Activated B cell treated with CpG ODN at 0.5 μM for 24 hours (primary cell): ENCODE measurements at regions of chr1 and their contacts with region 1.

Region 1: DNA sequence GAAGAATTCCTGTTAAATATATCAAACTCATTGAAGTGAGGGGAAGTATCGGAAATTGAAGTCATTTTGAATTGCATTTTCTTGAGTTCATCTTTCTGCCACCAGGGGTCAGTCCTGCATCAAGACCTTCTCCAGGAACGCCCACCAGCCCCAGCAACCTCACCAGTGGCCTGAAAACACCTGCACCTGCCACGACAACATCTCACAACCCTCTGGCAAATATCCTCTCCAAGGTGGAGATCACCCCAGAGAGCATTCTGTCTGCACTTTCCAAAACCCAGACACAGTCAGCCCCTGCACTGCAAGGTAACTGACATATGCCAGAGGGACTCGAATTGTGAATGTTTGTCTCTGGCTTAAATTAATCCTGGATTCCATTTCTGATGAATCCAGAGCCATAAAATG is 22.8 kb upstream of the TARS2 start:
- DNase-seq: peak; percentile 32
- ATAC-seq: peak; percentile 80
- H3K4me3 Mint-ChIP-seq: no peak overlapping the region
- H3K27ac Mint-ChIP-seq: no peak overlapping the region
- H3K4me1 Mint-ChIP-seq: peaks cover 4% of the 10 kb centered on the region
- H3K27me3 Mint-ChIP-seq: no peaks in the 10 kb centered on the region
- CTCF ChIP-seq: no peak

Region 2: GRCh38 chr1:149927503-149928387 is 536.7 kb before region 1 on chr1 and contains the start of gene SF3B4:
- CTCF ChIA-PET with region 1: no interaction called
- POLR2A ChIA-PET with region 1: no interaction called
- intact Hi-C with region 1: no loop called
- DNase-seq: peak; percentile 94
- ATAC-seq: peak; percentile 96
- H3K4me3 Mint-ChIP-seq: peak within 1 kb of the TSS; percentile 98
- H3K27ac Mint-ChIP-seq: peak within 1 kb of the TSS; percentile 95
- H3K4me1 Mint-ChIP-seq: peaks cover 36% of the 10 kb centered on the region
- H3K27me3 Mint-ChIP-seq: peaks cover 12% of the 10 kb centered on the region
- CTCF ChIP-seq: no peak
- total RNA-seq, gene SF3B4: 80.8 and 86.2 TPM in 2 replicates

Region 3: DNA sequence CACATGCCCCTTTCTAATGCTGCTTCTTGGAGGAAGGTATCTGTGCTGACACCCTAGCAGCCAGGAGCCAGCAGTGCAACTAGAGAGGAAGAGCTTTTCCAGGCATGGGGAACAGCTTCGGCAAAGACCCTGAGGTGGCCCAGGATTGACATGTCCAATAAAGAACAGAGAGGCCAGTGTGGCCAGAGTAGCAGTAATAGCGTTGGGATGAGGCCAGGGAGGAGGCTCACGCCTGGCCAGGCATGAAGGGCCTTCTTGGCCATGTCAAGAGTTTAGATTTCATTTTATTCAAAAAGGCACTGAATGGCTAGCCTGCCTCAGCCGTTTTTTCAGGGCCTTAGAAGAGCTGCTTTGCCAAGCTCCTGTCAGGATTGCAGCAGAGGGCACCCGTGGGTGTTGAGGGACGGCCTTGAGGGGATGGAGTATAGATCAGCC is 68.5 kb after region 1 on chr1:
- CTCF ChIA-PET with region 1: interaction called, 12 read pairs
- POLR2A ChIA-PET with region 1: no interaction called
- intact Hi-C with region 1: loop called (anchors 1 kb)
- DNase-seq: no peak
- ATAC-seq: no peak
- H3K4me3 Mint-ChIP-seq: no peak overlapping the region
- H3K27ac Mint-ChIP-seq: no peak overlapping the region
- H3K4me1 Mint-ChIP-seq: no peaks in the 10 kb centered on the region
- H3K27me3 Mint-ChIP-seq: no peaks in the 10 kb centered on the region
- CTCF ChIP-seq: no peak

Region 4: DNA sequence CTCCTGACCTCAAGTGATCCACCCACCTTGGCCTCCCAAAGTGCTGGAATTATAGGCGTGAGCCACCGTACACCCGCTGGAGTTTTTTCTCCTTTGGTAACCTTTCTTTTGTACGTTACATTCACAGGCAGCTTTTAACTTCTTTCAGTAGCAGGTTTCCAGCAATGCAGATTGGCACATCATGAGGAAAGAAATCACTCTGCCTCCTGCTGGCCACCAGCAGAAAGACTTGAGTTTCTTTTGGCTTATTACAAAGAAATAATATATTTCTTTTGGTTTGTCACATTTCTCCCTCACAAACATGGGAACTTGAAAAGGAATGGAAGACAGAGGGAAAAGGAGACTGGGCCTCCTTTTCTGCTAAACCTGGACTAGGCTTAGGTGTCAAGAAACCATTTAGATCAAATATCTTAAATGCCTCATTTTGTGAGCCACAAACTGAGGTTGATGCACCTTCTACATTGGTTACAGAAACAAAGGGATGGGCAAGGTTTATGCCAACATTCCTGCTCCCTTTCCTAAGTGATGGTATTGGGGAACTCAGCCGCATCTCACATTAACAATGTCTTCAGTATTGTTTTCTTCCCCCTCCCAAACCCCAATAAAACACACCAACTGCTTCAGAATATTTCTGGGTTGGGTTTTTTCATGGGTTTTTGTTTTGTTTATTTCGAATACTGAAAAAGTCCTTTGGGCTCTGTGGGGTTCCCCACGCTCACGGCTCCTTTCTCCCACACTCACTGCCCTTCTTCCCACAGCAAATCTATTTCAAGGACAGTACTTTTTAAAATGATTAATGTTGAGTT is 157.3 kb after region 1 on chr1:
- CTCF ChIA-PET with region 1: interaction called, 3 read pairs
- POLR2A ChIA-PET with region 1: no interaction called
- intact Hi-C with region 1: loop called (anchors 1 kb)
- DNase-seq: no peak
- ATAC-seq: peak; percentile 82
- H3K4me3 Mint-ChIP-seq: peak overlapping the region; percentile 28
- H3K27ac Mint-ChIP-seq: peak overlapping the region; percentile 82
- H3K4me1 Mint-ChIP-seq: peaks cover 36% of the 10 kb centered on the region
- H3K27me3 Mint-ChIP-seq: no peaks in the 10 kb centered on the region
- CTCF ChIP-seq: no peak

Region 5: DNA sequence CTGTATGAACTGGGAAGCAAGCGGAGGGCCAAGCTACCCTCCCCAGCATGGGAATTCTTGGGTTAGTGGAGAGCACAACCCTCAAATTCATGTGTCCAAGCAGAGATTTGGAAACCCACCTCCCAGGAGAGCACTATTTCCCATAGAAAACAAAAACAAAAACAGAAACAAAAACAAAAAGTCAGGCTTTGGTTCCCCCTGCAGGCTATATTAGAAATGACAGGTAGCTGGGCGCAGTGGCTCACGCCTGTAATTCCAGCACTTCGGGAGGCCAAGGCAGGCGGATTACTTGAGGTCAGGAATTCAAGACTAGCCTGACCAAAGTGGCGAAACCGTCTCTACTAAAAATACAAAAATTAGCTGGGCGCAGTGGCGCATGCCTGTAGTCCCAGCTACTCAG is 531.5 kb after region 1 on chr1:
- CTCF ChIA-PET with region 1: interaction called, 4 read pairs
- POLR2A ChIA-PET with region 1: no interaction called
- intact Hi-C with region 1: loop called (anchors 1 kb)
- DNase-seq: no peak
- ATAC-seq: peak; percentile 34
- H3K4me3 Mint-ChIP-seq: no peak overlapping the region
- H3K27ac Mint-ChIP-seq: no peak overlapping the region
- H3K4me1 Mint-ChIP-seq: no peaks in the 10 kb centered on the region
- H3K27me3 Mint-ChIP-seq: no peaks in the 10 kb centered on the region
- CTCF ChIP-seq: no peak